ENCODE measurements at regions of chr1 and their contacts with region 1.

Region 1: GRCh38 chr1:229339086-229339485 is 3.8 kb downstream of the CCSAP start:
- DNase-seq: no peak
- ATAC-seq: no peak
- H3K4me3 ChIP-seq: no peak overlapping the region
- H3K27ac ChIP-seq: no peak overlapping the region
- H3K4me1 ChIP-seq: 0 out of 3 replicates have a peak, but pooled peaks cover 8% of the 10 kb centered on the region
- CTCF ChIP-seq: no peak
- EP300 ChIP-seq: no peak
- POLR2A ChIP-seq: no peak
- RAD21 ChIP-seq: no peak

Region 2: GRCh38 chr1:229355661-229356060 is 16.6 kb after region 1 on chr1:
- CTCF ChIA-PET with region 1: no interaction called
- POLR2A ChIA-PET with region 1: interaction called, 11 read pairs
- DNase-seq: no peak
- ATAC-seq: no peak
- H3K4me3 ChIP-seq: no peak overlapping the region
- H3K27ac ChIP-seq: no peak overlapping the region
- H3K4me1 ChIP-seq: no peaks in the 10 kb centered on the region
- CTCF ChIP-seq: no peak
- EP300 ChIP-seq: no peak
- POLR2A ChIP-seq: no peak
- RAD21 ChIP-seq: no peak

Region 3: GRCh38 chr1:229645324-229645993 is 306.4 kb after region 1 on chr1:
- CTCF ChIA-PET with region 1: no interaction called
- POLR2A ChIA-PET with region 1: no interaction called
- DNase-seq: no peak
- ATAC-seq: no peak
- H3K4me3 ChIP-seq: no peak overlapping the region
- H3K27ac ChIP-seq: no peak overlapping the region
- H3K4me1 ChIP-seq: no peaks in the 10 kb centered on the region
- CTCF ChIP-seq: no peak
- EP300 ChIP-seq: no peak
- POLR2A ChIP-seq: no peak
- RAD21 ChIP-seq: no peak